Transverse colon (tissue), 4 donors: ENCODE measurements at regions of chr19 and their contacts with region 1.

Region 1: GRCh38 chr19:32318880-32319520 is 26.4 kb upstream of the ZNF507 start:
- DNase-seq: no peak
- H3K4me3 ChIP-seq: no peak overlapping the region
- H3K27ac ChIP-seq: no peak overlapping the region
- H3K4me1 ChIP-seq: no peaks in the 10 kb centered on the region
- H3K27me3 ChIP-seq: no peaks in the 10 kb centered on the region
- CTCF ChIP-seq: peak in 4 of 5 experiments; percentile 14 to 19 (median 18)
- EP300 ChIP-seq: no peak
- POLR2A ChIP-seq: no peak

Region 2: DNA sequence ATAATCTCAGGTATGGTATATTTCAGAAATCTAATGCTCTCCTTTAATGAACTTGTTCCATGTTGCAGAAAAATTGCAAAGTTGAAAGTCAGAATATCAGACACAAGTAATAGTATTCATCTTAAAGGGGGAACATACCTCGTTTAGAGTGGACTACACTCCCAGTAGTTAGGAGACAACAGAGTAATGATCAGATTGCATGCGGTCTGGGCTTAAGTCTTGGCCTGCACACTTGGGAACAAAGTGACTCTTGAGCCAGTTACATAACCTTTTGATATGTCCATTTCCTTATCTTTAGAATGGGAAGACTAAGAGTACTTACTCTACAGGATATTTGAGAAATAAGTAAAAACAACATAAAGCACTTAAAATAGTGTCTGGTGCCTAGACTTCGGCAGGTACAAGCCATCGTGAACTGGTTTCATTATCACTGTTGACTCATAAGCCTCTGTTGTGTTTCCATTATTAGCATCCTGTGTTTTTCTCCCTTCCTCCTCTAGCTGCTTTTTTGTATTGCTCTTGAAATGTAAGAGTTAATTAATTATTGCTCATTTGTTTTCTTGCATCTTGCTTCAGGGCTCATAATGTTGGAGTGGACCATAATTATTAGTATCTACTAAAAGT is 139.6 kb after region 1 on chr19:
- in situ Hi-C with region 1: no loop called
- intact Hi-C with region 1: loop called (anchors 10 kb)
- DNase-seq: no peak
- H3K4me3 ChIP-seq: no peak overlapping the region
- H3K27ac ChIP-seq: no peak overlapping the region
- H3K4me1 ChIP-seq: peaks cover 0 to 5% (median 0%) of the 10 kb centered on the region in 4 donors
- H3K27me3 ChIP-seq: no peaks in the 10 kb centered on the region
- CTCF ChIP-seq: no peak
- EP300 ChIP-seq: no peak
- POLR2A ChIP-seq: no peak